ENCODE measurements at regions of chr16 and their contacts with region 1.

Region 1: DNA sequence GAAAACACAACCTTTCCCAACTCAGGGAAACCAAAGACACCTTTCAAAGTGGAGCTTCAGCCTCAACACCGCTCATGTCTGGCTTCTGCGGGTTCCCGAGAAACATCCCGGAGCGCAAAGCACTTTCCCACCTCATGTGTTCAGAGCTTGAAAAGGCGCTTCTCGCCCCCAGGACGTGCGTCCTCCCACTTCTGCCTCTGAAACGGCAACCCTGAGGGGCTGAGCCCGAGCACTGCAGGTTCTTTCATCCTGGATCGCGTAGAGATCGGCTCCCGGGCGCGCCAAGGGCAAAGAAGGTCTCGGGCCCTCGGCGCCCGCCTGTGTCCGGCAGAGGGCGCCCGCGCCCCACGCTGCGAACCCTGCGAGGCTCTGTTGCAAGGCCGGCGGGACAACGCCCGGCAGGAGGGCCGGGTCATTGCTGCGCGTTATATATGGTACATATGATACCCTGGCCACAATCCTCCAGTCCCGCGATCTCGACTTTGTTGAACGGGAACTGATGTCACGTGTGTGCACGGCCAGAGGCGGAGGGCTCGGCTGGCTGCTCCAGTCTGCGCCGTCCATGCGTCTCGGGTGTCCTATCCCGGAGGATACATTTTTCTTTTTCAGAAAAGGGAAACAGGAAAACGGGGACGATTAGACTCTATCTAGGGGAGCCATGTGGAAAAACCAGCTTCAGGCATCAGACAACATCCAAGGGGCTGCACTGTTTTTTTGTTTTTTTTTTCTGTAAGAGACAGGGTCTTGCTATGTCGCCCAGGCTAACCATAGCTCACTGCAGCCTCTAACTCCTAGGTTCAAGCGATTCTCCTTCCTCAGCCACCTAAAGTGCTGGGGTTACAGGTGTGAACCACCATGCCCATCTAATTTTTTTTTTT is 19.1 kb downstream of the COQ7 start:
- DNase-seq: peak; percentile 95
- ATAC-seq: peak; percentile 98
- H3K4me3 ChIP-seq: peak overlapping the region; percentile 45 to 84 (median 47)
- H3K27ac ChIP-seq: no peak overlapping the region
- H3K4me1 ChIP-seq: peaks cover 15% of the 10 kb centered on the region
- H3K27me3 ChIP-seq: peaks cover 0 to 9% of the 10 kb centered on the region in 2 experiments; a peak in 2 of 5 replicates
- CTCF ChIP-seq: peak; percentile 100
- EP300 ChIP-seq: peak; percentile 28 to 80; a peak in 1 of 4 replicates
- POLR2A ChIP-seq: peak in 1 of 2 experiments; percentile 78; a peak in 2 of 4 replicates
- RAD21 ChIP-seq: peak; percentile 100

Region 2: GRCh38 chr16:18983565-18984424 is 102.8 kb before region 1 on chr16 and contains the start of gene TMC7:
- CTCF ChIA-PET with region 1: interaction called, 10 read pairs
- POLR2A ChIA-PET with region 1: interaction called, 3 read pairs
- in situ Hi-C with region 1: no loop called
- intact Hi-C with region 1: no loop called
- DNase-seq: peak; percentile 91
- ATAC-seq: peak; percentile 99
- H3K4me3 ChIP-seq: peak within 1 kb of the TSS; percentile 60 to 85 (median 79)
- H3K27ac ChIP-seq: no peak within 1 kb of the TSS
- H3K4me1 ChIP-seq: peaks cover 44% of the 10 kb centered on the region
- H3K27me3 ChIP-seq: peaks cover 1 to 17% of the 10 kb centered on the region in 2 experiments; a peak in 4 of 5 replicates
- CTCF ChIP-seq: peak; percentile 99
- EP300 ChIP-seq: no peak
- POLR2A ChIP-seq: no peak
- RAD21 ChIP-seq: peak; percentile 100
- total RNA-seq, gene TMC7: 1.2 TPM in 2 replicates

Region 3: GRCh38 chr16:19105891-19106624 is 19.5 kb after region 1 on chr16:
- CTCF ChIA-PET with region 1: interaction called, 8 read pairs
- POLR2A ChIA-PET with region 1: interaction called, 9 read pairs
- in situ Hi-C with region 1: no loop called
- intact Hi-C with region 1: loop called (anchors 2 kb)
- DNase-seq: no peak
- ATAC-seq: no peak
- H3K4me3 ChIP-seq: no peak overlapping the region
- H3K27ac ChIP-seq: no peak overlapping the region
- H3K4me1 ChIP-seq: peaks cover 66% of the 10 kb centered on the region
- H3K27me3 ChIP-seq: peaks cover 2 to 16% of the 10 kb centered on the region in 2 experiments; a peak in 4 of 5 replicates
- CTCF ChIP-seq: no peak
- EP300 ChIP-seq: no peak
- POLR2A ChIP-seq: no peak
- RAD21 ChIP-seq: no peak

Region 4: DNA sequence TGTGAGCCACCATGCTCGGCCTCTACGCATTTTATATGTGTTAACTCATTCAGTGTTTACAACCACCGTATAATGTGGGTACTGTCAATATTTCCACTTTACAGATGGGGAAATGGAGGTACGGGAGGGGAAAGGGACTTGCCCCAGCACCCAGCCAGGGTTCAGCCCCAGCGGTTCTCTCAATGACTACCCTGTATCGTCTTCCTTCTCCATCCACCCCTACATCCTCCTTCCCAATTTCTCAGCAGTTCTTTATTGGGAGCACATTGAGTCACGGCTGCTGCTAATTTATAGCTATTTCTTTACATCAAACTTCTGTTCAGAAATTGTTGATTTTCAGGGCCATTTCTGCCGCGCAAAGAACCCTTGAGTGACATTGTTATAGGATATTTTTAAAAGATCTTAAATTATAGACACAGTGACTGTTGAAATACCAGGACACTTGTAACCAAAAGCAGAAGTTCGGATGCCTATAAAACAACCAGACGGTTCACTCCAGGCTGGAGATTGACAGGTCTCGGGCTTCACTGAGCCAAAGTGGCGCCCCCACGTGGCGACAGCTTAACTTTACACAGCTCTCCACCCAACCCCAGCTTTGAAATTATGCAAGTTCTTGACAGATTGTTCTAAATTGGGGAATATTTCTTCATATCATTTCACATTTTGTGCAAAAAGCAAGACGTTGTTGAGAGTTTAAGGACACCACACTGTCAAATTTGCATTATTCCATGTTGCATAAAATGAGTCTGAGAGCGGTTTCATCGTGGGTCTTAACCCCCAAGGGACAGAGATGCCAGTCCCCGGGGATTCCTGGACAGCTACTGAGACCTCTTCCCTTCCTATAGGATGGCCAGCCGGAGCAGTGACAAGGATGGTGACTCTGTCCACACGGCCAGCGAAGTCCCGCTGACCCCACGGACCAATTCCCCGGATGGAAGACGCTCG is 93.3 kb after region 1 on chr16:
- CTCF ChIA-PET with region 1: interaction called, 87 read pairs
- POLR2A ChIA-PET with region 1: interaction called, 12 read pairs
- in situ Hi-C with region 1: loop called (anchors 5 kb)
- intact Hi-C with region 1: loop called (anchors 1 kb)
- DNase-seq: peak; percentile 62
- ATAC-seq: peak; percentile 73
- H3K4me3 ChIP-seq: no peak overlapping the region
- H3K27ac ChIP-seq: no peak overlapping the region
- H3K4me1 ChIP-seq: peaks cover 48% of the 10 kb centered on the region
- H3K27me3 ChIP-seq: 0 out of 5 replicates have a peak, but pooled peaks cover 0 to 4% of the 10 kb centered on the region in 2 experiments
- CTCF ChIP-seq: peak; percentile 80
- EP300 ChIP-seq: 0 out of 4 replicates have a peak, but pooled peaks of 1 of the 2 experiments have one; percentile 8
- POLR2A ChIP-seq: no peak
- RAD21 ChIP-seq: peak; percentile 75

Region 5: GRCh38 chr16:19502395-19503131 is 416.0 kb after region 1 on chr16:
- CTCF ChIA-PET with region 1: interaction called, 12 read pairs
- POLR2A ChIA-PET with region 1: no interaction called
- in situ Hi-C with region 1: loop called (anchors 5 kb)
- intact Hi-C with region 1: loop called (anchors 1 kb)
- DNase-seq: peak; percentile 84
- ATAC-seq: peak; percentile 94
- H3K4me3 ChIP-seq: no peak overlapping the region
- H3K27ac ChIP-seq: no peak overlapping the region
- H3K4me1 ChIP-seq: no peaks in the 10 kb centered on the region
- H3K27me3 ChIP-seq: no peaks in the 10 kb centered on the region
- CTCF ChIP-seq: peak; percentile 89
- EP300 ChIP-seq: no peak
- POLR2A ChIP-seq: no peak
- RAD21 ChIP-seq: peak; percentile 83